OCI-LY7 (cell line): ENCODE measurements at regions of chr1 and their contacts with region 1.

Region 1: GRCh38 chr1:192639607-192640368 is 3.8 kb downstream of the RGS13 start:
- DNase-seq: peak; percentile 42
- H3K4me3 ChIP-seq: peak overlapping the region; percentile 80
- H3K27ac ChIP-seq: peak overlapping the region; percentile 100
- H3K4me1 ChIP-seq: peaks cover 42% of the 10 kb centered on the region
- CTCF ChIP-seq: no peak

Region 2: DNA sequence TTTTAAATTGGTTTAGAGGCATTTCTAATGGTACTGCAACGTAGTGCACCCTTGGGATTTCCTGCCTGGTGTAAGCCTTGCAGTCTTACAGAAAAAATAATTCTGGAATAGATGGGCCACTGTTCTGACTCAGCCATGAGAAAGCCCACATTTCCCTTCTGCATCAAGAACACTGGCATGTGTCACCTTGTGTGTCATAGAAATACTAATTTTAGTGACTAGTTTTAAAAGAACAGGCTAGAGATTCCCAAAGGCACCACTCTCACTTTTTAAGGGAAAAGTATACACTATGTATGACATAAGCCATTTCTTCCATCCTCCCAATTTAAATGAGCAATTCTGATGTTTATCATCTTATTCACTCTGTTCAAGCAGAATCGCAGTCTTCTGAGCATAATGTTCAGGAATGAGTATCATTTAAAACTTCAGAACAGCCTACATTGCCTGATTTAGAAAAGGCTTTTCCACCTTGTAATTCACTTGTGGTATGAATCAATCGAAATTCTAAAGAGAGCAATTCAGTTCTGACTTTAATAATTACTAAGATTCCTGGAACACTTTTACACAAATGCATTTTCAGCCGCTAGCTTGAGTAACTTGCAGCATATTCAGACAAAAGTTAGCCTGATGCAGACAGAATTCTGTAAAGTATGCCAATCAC is 14.9 kb after region 1 on chr1:
- CTCF ChIA-PET with region 1: no interaction called
- POLR2A ChIA-PET with region 1: interaction called, 13 read pairs
- intact Hi-C with region 1: no loop called
- DNase-seq: no peak
- H3K4me3 ChIP-seq: no peak overlapping the region
- H3K27ac ChIP-seq: no peak overlapping the region
- H3K4me1 ChIP-seq: peaks cover 14% of the 10 kb centered on the region
- CTCF ChIP-seq: no peak